Motor neuron (in vitro differentiated cells): ENCODE measurements at regions of chr9 and their contacts with region 1.

Region 1: GRCh38 chr9:2857564-2858198 is 13.8 kb upstream of the PUM3 start:
- ATAC-seq: peak; percentile 84 to 99 (median 91)
- H3K4me3 ChIP-seq: no peak overlapping the region
- H3K27ac ChIP-seq: no peak overlapping the region
- H3K4me1 ChIP-seq: no peaks in the 10 kb centered on the region

Region 2: DNA sequence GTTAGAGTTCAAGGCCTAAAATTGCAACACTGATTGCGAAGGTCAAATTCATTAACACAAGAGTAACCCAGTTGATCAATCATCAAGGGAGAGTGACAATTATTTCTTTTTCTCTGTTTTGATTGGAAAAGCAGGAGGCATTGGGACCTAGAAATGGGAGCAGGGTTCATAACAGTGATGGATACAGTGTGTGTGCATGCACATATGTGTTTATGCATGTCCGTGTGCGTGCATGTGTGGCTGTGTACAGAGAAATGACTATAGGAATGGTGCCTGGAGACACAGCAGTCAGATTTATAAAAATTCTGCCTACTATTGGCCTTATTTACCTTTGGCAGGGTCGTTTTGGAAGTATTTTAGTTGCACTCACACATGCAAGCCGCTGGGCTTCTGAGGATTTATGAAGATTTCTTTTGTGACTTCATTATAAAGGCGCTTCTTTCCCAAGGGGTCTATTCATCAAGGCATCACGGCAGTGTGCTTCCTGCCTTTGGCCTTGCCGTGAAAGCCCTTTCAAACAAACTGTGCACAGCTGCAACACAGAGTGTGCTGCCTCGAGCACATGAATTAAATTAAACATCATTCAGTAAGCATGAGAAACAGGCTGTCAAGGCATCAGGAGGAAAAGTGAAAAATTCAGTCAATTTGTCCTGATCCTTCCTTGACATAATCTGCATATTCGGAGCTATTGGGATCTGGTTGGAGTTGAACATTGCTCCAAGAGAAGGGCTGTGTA is 109.1 kb after region 1 on chr9:
- in situ Hi-C with region 1: loop called in 1 of 9 experiments (anchors 25 kb)
- ATAC-seq: peak in 6 of 8 experiments; percentile 13 to 96 (median 95)
- H3K4me3 ChIP-seq: no peak overlapping the region
- H3K27ac ChIP-seq: peak overlapping the region in 1 of 2 donors; percentile 16
- H3K4me1 ChIP-seq: peaks cover 22 to 34% of the 10 kb centered on the region in 2 donors

Region 3: GRCh38 chr9:3181049-3181953 is 323.6 kb after region 1 on chr9:
- in situ Hi-C with region 1: loop called in 3 of 9 experiments (anchors 10 to 25 kb)
- ATAC-seq: peak; percentile 45 to 88 (median 80)
- H3K4me3 ChIP-seq: peak overlapping the region; percentile 22 to 45 (median 30)
- H3K27ac ChIP-seq: no peak overlapping the region
- H3K4me1 ChIP-seq: peaks cover 0 to 3% of the 10 kb centered on the region in 2 donors

Region 4: GRCh38 chr9:3441197-3441816 is 583.6 kb after region 1 on chr9:
- in situ Hi-C with region 1: loop called in 1 of 9 experiments (anchors 25 kb)
- ATAC-seq: peak in 4 of 8 experiments; percentile 63 to 84 (median 76)
- H3K4me3 ChIP-seq: no peak overlapping the region
- H3K27ac ChIP-seq: no peak overlapping the region
- H3K4me1 ChIP-seq: no peaks in the 10 kb centered on the region

Region 5: GRCh38 chr9:3760031-3760430 is 902.4 kb after region 1 on chr9:
- in situ Hi-C with region 1: no loop called
- ATAC-seq: peak in 2 of 8 experiments; percentile 39 to 73
- H3K4me3 ChIP-seq: no peak overlapping the region
- H3K27ac ChIP-seq: no peak overlapping the region
- H3K4me1 ChIP-seq: peaks cover 7 to 12% of the 10 kb centered on the region in 2 donors

Region 6: DNA sequence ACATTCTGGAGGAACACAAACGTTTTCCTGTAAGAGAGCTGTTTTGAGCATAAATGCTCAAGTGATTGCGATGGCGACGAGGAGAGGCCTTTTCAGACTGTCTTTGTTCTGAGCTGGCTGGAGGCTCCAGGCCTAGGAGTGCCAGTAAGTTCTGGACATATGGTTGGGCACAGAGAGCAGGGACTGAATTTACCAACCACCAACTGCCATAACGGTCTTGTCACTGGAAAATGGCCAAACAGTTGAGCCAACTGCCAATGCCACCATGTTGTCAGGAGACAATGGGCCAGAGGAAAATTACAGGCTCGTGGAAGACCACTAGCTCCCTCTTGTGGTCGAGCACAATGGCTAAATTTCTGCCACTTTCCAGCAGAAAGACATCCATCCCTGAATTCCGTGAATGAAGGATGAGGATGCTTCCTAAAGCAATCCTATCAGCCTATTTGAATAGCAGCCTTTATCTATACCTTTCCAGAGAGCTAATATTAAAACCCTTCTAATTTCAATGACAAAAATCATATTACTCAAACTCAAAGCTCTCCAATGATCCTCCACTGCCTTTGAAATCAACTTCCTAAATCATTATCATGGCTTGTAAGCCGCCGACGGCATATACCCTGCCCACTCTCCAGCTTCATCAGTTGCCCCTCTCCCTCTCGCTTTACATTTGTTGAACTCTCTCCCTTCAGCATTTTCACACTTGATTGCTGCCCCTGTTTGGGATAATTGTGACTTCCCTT is 1509.1 kb after region 1 on chr9:
- in situ Hi-C with region 1: loop called in 6 of 9 experiments (anchors 25 kb)
- ATAC-seq: peak in 2 of 8 experiments; percentile 20 to 35
- H3K4me3 ChIP-seq: no peak overlapping the region
- H3K27ac ChIP-seq: no peak overlapping the region
- H3K4me1 ChIP-seq: no peaks in the 10 kb centered on the region

Region 7: GRCh38 chr9:4382722-4383317 is 1525.1 kb after region 1 on chr9:
- in situ Hi-C with region 1: loop called in 1 of 9 experiments (anchors 25 kb)
- ATAC-seq: peak in 3 of 8 experiments; percentile 28 to 55 (median 29)
- H3K4me3 ChIP-seq: no peak overlapping the region
- H3K27ac ChIP-seq: no peak overlapping the region
- H3K4me1 ChIP-seq: no peaks in the 10 kb centered on the region